ENCODE measurements at regions of chr10 and their contacts with region 1.

Region 1: GRCh38 chr10:52755297-52756062 is 17.1 kb downstream of the MBL2 start:
- DNase-seq: peak; percentile 55
- H3K4me3 ChIP-seq: no peak overlapping the region
- H3K27ac ChIP-seq: no peak overlapping the region
- H3K4me1 ChIP-seq: no peaks in the 10 kb centered on the region
- H3K27me3 ChIP-seq: no peaks in the 10 kb centered on the region
- CTCF ChIP-seq: no peak

Region 2: GRCh38 chr10:52652431-52653262 is 102.8 kb before region 1 on chr10:
- CTCF ChIA-PET with region 1: no interaction called
- dilution Hi-C with region 1: loop called (anchors 5 kb)
- in situ Hi-C with region 1: no loop called
- intact Hi-C with region 1: no loop called
- DNase-seq: no peak
- H3K4me3 ChIP-seq: no peak overlapping the region
- H3K27ac ChIP-seq: no peak overlapping the region
- H3K4me1 ChIP-seq: no peaks in the 10 kb centered on the region
- H3K27me3 ChIP-seq: no peaks in the 10 kb centered on the region
- CTCF ChIP-seq: no peak

Measured in mammary epithelial cell (primary cell).